ENCODE measurements at regions of chr3 and their contacts with region 1.

Region 1: GRCh38 chr3:149575961-149576564 is 81.8 kb downstream of the WWTR1 start:
- DNase-seq: no peak
- CTCF ChIP-seq: no peak

Region 2: GRCh38 chr3:149553781-149554451 is 22.1 kb before region 1 on chr3:
- CTCF ChIA-PET with region 1: interaction called, 22 read pairs
- POLR2A ChIA-PET with region 1: no interaction called
- DNase-seq: no peak
- CTCF ChIP-seq: no peak

Region 3: DNA sequence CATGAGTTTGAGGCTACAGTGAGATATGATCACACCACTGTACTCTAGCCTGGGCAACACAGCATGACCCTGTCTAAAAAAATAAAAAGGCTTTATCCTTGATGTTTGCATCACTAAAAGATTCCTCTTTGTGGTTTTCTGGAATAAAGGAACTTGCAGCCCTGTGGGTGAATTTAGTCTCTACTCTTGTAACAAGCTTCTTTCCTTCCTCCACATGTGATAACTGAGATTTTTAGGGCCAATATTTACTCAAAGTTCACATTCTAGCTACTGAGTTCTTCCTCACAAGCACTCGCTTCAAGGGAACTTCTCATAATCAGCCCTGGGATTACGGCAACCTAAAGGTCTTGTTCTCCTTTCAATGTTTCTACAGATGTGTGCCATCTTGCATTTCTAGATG is 151.6 kb after region 1 on chr3:
- CTCF ChIA-PET with region 1: no interaction called
- POLR2A ChIA-PET with region 1: no interaction called
- DNase-seq: no peak
- CTCF ChIP-seq: no peak

Region 4: DNA sequence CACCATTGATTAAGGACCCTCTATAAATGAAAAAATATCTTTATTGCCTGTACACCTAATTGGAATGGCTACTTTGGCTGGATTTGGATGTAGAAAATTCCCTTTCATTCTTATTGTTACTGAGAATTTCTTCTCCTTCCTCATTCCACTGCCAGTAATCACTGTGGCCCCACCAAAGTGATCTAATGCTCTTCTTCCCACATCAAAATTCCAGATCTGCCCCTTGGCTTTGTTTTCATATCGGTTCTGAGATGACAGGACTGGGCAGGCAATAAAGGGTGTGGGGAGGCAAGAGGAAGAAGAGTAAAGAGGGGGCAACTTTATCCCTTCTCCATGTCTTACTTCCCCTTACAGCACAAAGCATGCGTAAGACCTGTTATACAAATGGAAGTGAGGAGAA is 214.2 kb after region 1 on chr3:
- CTCF ChIA-PET with region 1: no interaction called
- POLR2A ChIA-PET with region 1: no interaction called
- DNase-seq: no peak
- CTCF ChIP-seq: no peak